HepG2 (cell line): ENCODE measurements at regions of chr6 and their contacts with region 1.

Region 1: GRCh38 chr6:77740380-77740779 is 87.5 kb downstream of the MEI4 start:
- DNase-seq: peak; percentile 18
- ATAC-seq: no peak
- H3K4me3 ChIP-seq: no peak overlapping the region
- H3K27ac ChIP-seq: no peak overlapping the region
- H3K4me1 ChIP-seq: no peaks in the 10 kb centered on the region
- H3K27me3 ChIP-seq: no peaks in the 10 kb centered on the region
- CTCF ChIP-seq: peak; percentile 49
- EP300 ChIP-seq: no peak
- POLR2A ChIP-seq: no peak
- RAD21 ChIP-seq: peak; percentile 38; the same call in 1 of the 2 replicates

Region 2: DNA sequence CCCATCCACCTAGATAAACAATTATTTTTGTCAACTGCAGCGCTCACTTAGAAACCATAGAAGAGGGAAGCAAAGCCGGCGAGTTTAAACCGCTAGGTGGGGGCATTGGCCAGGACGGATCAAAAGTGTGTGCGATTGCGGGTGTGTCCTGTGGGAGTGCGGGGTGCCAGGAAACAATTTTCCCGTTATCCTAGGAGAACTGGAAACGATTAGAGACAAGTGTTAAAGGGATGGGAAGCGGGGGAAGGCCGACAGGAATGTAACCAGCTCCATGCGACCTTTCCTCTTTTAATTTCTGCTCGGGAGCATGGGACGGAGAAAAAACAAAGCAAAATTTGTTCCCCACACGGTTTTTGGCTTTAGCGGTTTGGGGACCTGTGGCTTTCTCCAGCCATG is 274.3 kb before region 1 on chr6:
- CTCF ChIA-PET with region 1: no interaction called
- POLR2A ChIA-PET with region 1: no interaction called
- in situ Hi-C with region 1: no loop called
- intact Hi-C with region 1: loop called (anchors 10 kb)
- DNase-seq: peak; percentile 20
- ATAC-seq: peak; percentile 93
- H3K4me3 ChIP-seq: no peak overlapping the region
- H3K27ac ChIP-seq: no peak overlapping the region
- H3K4me1 ChIP-seq: no peaks in the 10 kb centered on the region
- H3K27me3 ChIP-seq: peaks cover 1 to 44% of the 10 kb centered on the region in 2 experiments; a peak in 3 of 5 replicates
- CTCF ChIP-seq: peak; percentile 63
- EP300 ChIP-seq: no peak
- POLR2A ChIP-seq: no peak
- RAD21 ChIP-seq: no peak

Region 3: GRCh38 chr6:77774457-77774856 is 34.1 kb after region 1 on chr6:
- CTCF ChIA-PET with region 1: no interaction called
- POLR2A ChIA-PET with region 1: no interaction called
- in situ Hi-C with region 1: no loop called
- intact Hi-C with region 1: no loop called
- DNase-seq: no peak
- ATAC-seq: no peak
- H3K4me3 ChIP-seq: no peak overlapping the region
- H3K27ac ChIP-seq: no peak overlapping the region
- H3K4me1 ChIP-seq: no peaks in the 10 kb centered on the region
- H3K27me3 ChIP-seq: no peaks in the 10 kb centered on the region
- CTCF ChIP-seq: no peak
- EP300 ChIP-seq: no peak
- POLR2A ChIP-seq: no peak
- RAD21 ChIP-seq: no peak